GM12878 (cell line): ENCODE measurements at regions of chr3 and their contacts with region 1.

Region 1: DNA sequence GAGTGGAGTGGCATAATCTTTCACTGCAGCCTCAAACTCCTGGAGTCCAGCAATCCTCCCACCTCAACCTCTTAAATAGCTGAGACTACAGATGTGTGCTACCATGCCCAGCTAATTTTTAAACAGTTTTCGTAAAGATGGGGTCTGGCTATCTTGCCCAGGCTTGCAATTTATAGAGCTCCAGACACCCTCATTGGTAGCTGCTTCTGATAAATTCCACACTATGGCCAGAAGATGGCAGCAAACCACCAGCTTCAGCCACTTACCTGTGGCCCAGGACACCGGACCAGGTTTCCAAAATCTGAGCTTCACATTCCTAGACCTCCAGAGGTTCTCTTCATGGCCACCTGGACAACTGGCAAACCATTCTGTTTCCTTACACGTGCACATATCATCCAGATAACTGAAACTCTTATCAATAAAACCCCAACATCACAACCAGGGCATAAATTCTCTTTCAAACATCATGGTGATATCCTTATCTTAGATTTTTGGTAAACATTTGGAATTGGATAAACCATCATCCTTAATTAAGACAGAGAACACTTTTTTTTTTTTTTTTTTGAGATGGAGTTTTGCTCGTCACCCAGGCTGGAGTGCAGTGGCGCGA is 28.9 kb downstream of the FBXW12 start:
- DNase-seq: peak; percentile 26
- ATAC-seq: peak; percentile 92
- H3K4me3 ChIP-seq: no peak overlapping the region
- H3K27ac ChIP-seq: no peak overlapping the region
- H3K4me1 ChIP-seq: no peaks in the 10 kb centered on the region
- H3K27me3 ChIP-seq: no peaks in the 10 kb centered on the region
- CTCF ChIP-seq: peak; percentile 71 to 90 (median 80); a peak in 5 of 6 replicates
- EP300 ChIP-seq: no peak
- POLR2A ChIP-seq: no peak
- RAD21 ChIP-seq: peak; percentile 93

Region 2: GRCh38 chr3:48130321-48130904 is 270.5 kb before region 1 on chr3:
- CTCF ChIA-PET with region 1: no interaction called
- POLR2A ChIA-PET with region 1: no interaction called
- RAD21 ChIA-PET with region 1: no interaction called
- SMC1A ChIA-PET with region 1: no interaction called
- in situ Hi-C with region 1: no loop called
- intact Hi-C with region 1: no loop called
- DNase-seq: no peak
- ATAC-seq: no peak
- H3K4me3 ChIP-seq: no peak overlapping the region
- H3K27ac ChIP-seq: no peak overlapping the region
- H3K4me1 ChIP-seq: peaks cover 15% of the 10 kb centered on the region
- H3K27me3 ChIP-seq: no peaks in the 10 kb centered on the region
- CTCF ChIP-seq: no peak
- EP300 ChIP-seq: no peak
- POLR2A ChIP-seq: no peak
- RAD21 ChIP-seq: no peak

Region 3: DNA sequence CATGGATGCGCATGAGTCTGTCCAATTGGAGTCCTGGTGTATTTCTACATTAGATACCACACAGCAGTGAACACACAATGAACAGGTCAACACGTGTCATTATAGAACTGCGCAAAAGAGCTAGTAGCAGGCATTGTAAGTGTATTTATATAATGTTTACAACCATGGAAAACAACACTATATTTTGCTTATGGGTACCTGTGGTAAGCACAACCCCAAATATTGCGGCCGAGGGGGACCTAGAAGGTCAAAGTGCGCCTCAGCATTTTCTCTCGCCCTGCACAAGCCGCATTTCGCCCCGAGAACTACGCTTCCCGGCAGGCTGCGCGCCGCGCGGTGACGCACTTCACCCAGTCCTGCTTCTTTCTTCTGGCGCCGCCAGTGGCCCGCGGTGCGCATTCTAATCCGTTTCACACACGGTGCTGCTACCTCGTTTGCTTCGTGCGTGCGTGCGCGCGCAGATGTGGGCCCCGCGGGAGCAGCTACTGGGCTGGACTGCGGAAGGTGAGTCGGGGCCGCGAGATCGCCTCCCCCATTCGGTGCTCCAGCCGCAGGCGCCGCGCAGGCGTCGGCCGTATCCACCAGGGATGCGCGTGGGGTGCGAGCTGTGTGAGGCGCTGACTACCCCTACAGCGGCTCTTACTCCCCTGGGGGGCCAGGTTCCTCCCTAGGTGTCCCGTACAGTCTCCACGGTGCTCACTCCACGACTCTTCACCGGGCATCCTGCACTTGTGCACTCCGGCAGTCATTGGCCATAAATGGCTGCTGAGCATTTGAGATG is 160.0 kb before region 1 on chr3 and contains the start of gene ZNF589:
- CTCF ChIA-PET with region 1: interaction called, 5 read pairs
- POLR2A ChIA-PET with region 1: no interaction called
- RAD21 ChIA-PET with region 1: interaction called, 9 read pairs
- SMC1A ChIA-PET with region 1: interaction called, 10 read pairs
- in situ Hi-C with region 1: no loop called
- intact Hi-C with region 1: no loop called
- DNase-seq: peak; percentile 87
- ATAC-seq: peak; percentile 98
- H3K4me3 ChIP-seq: peak within 1 kb of the TSS; percentile 96
- H3K27ac ChIP-seq: peak within 1 kb of the TSS; percentile 74
- H3K4me1 ChIP-seq: peaks cover 7% of the 10 kb centered on the region; the same call in 1 of the 2 replicates
- H3K27me3 ChIP-seq: no peaks in the 10 kb centered on the region
- CTCF ChIP-seq: peak in 2 of 3 experiments; percentile 39 to 59; a peak in 5 of 6 replicates
- EP300 ChIP-seq: no peak
- POLR2A ChIP-seq: peak; percentile 99
- RAD21 ChIP-seq: 0 out of 2 replicates have a peak, but pooled peaks have one; percentile 15
- polyA plus RNA-seq, gene ZNF589: 6.5 to 10.1 TPM

Region 4: GRCh38 chr3:48388966-48389365 is 12.0 kb before region 1 on chr3:
- CTCF ChIA-PET with region 1: interaction called, 14 read pairs
- POLR2A ChIA-PET with region 1: no interaction called
- RAD21 ChIA-PET with region 1: interaction called, 4 read pairs
- SMC1A ChIA-PET with region 1: interaction called, 10 read pairs
- in situ Hi-C with region 1: no loop called
- intact Hi-C with region 1: no loop called
- DNase-seq: no peak
- ATAC-seq: no peak
- H3K4me3 ChIP-seq: no peak overlapping the region
- H3K27ac ChIP-seq: no peak overlapping the region
- H3K4me1 ChIP-seq: no peaks in the 10 kb centered on the region
- H3K27me3 ChIP-seq: no peaks in the 10 kb centered on the region
- CTCF ChIP-seq: no peak
- EP300 ChIP-seq: no peak
- POLR2A ChIP-seq: no peak
- RAD21 ChIP-seq: no peak

Region 5: DNA sequence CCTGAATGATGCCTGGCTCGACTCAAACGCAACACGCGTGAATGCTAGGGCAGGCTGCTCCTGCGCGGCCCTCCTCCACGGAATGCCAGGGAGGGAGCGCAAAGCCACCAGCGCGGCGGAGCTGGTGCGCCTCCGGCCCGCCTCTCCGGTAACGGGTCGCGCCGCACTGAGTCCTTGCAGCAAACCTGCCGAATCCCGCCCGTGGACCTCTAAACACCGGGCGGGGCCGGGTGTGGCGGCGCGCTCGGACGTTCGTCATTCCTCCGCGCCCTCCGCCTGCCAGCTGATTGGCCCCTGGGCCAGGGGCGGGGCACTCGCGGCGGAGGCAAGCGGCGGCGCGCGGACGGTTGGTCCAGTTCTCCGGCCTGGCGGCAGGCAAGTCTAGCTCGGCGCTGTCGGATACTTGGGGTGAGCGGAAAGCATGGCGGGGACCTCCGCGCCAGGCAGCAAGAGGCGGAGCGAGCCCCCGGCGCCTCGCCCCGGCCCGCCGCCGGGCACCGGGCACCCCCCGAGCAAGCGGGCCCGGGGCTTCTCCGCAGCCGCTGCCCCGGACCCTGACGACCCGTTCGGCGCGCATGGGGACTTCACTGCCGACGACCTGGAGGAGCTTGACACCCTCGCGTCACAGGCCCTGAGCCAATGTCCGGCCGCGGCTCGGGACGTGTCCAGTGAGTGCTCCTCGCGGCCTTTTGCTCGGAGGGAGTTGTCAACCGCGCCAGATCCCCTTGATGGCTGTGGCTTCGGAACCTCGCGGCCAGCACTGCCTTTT is 45.7 kb after region 1 on chr3 and contains the start of gene ATRIP:
- CTCF ChIA-PET with region 1: interaction called, 757 read pairs
- POLR2A ChIA-PET with region 1: no interaction called
- RAD21 ChIA-PET with region 1: interaction called, 8 read pairs
- SMC1A ChIA-PET with region 1: interaction called, 287 read pairs
- in situ Hi-C with region 1: no loop called
- intact Hi-C with region 1: no loop called
- DNase-seq: no peak
- ATAC-seq: peak; percentile 96
- H3K4me3 ChIP-seq: peak within 1 kb of the TSS; percentile 74
- H3K27ac ChIP-seq: peak within 1 kb of the TSS; percentile 72
- H3K4me1 ChIP-seq: peaks cover 13% of the 10 kb centered on the region
- H3K27me3 ChIP-seq: no peaks in the 10 kb centered on the region
- CTCF ChIP-seq: no peak
- EP300 ChIP-seq: no peak
- POLR2A ChIP-seq: peak; percentile 98
- RAD21 ChIP-seq: no peak
- polyA plus RNA-seq, gene ATRIP: 1.4 to 2.4 TPM

Region 6: DNA sequence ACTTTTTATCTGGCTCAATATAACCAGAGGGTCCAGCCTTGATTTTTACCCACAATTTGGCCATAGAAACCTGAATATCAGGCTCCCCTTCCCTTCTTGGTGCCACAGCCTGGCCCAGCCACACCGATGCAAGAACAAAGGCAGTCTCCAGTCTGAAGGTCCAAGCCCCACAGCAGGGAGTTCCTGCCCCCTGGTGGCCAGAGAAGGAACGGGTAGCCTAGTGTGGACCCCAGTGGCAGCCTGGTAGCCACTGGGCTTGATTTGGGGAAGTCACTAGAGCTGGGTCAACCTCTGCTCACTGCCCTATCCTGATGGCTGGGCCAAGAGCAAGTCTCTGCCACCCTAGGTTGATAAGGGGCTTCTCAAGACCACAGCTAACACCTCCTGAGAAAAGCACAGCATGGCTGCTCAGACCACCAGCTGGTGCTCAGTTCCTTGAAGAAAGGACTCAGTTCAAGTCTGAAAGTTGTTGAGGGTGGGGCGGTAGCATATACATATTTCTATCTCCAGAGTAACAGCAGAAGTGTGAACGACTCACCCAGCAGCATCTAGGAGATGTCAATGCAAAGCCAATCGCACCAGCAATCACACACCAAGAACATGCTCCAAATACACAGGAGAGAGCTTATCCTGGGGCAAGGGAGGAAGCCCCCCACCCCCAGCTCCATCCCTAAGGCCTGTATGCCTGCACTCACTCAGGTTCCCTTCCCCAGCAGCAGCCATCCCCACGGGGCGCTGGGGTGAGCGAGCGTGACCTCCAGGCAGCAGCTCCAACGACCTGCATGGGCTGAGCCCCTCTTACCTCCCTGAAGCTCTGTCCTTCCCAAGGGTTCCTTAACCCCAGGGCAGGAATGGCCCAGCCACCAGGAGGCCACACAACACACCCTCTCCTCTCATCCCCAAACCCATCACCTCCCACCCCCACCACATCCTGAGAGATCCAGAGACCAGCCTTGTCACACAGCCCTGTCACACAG is 148.1 kb after region 1 on chr3:
- CTCF ChIA-PET with region 1: interaction called, 61 read pairs
- POLR2A ChIA-PET with region 1: no interaction called
- RAD21 ChIA-PET with region 1: interaction called, 35 read pairs
- SMC1A ChIA-PET with region 1: interaction called, 23 read pairs
- in situ Hi-C with region 1: no loop called
- intact Hi-C with region 1: loop called (anchors 1 kb)
- DNase-seq: no peak
- ATAC-seq: peak; percentile 100
- H3K4me3 ChIP-seq: no peak overlapping the region
- H3K27ac ChIP-seq: no peak overlapping the region
- H3K4me1 ChIP-seq: no peaks in the 10 kb centered on the region; the same call in 1 of the 2 replicates
- H3K27me3 ChIP-seq: no peaks in the 10 kb centered on the region
- CTCF ChIP-seq: peak; percentile 90 to 95 (median 95)
- EP300 ChIP-seq: no peak
- POLR2A ChIP-seq: no peak
- RAD21 ChIP-seq: peak; percentile 93

Region 7: GRCh38 chr3:48635222-48636021 is 234.5 kb after region 1 on chr3 and contains the start of gene SLC26A6:
- CTCF ChIA-PET with region 1: interaction called, 17 read pairs
- POLR2A ChIA-PET with region 1: no interaction called
- RAD21 ChIA-PET with region 1: interaction called, 18 read pairs
- SMC1A ChIA-PET with region 1: interaction called, 3 read pairs
- in situ Hi-C with region 1: no loop called
- intact Hi-C with region 1: no loop called
- DNase-seq: peak; percentile 77
- ATAC-seq: peak; percentile 96
- H3K4me3 ChIP-seq: peak within 1 kb of the TSS; percentile 77
- H3K27ac ChIP-seq: peak within 1 kb of the TSS; percentile 57
- H3K4me1 ChIP-seq: peaks cover 11% of the 10 kb centered on the region; the same call in 1 of the 2 replicates
- H3K27me3 ChIP-seq: no peaks in the 10 kb centered on the region
- CTCF ChIP-seq: peak; percentile 52 to 81 (median 78)
- EP300 ChIP-seq: no peak
- POLR2A ChIP-seq: peak; percentile 77
- RAD21 ChIP-seq: peak; percentile 43
- polyA plus RNA-seq, gene SLC26A6: 2.1 to 2.9 TPM

Region 8: DNA sequence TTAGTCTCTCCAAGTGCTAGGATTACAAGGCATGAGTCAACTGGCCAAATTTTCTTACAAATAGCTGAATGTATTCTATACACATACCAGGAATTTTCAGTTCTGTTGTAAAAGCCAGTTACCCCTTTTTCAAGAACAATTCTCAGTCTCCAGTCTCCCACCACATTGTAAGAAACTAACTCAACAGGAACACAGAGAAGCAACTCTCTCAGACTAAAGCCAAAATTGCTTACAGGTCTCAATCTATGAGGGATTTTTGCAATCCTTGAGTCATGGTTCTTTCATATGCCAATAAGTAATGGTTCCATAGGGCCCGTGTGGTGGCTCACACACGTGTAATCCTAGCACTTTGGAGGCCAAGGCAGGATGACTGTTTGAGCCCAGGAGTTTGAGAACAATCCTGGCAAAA is 307.6 kb after region 1 on chr3:
- CTCF ChIA-PET with region 1: no interaction called
- POLR2A ChIA-PET with region 1: no interaction called
- RAD21 ChIA-PET with region 1: no interaction called
- SMC1A ChIA-PET with region 1: no interaction called
- in situ Hi-C with region 1: no loop called
- intact Hi-C with region 1: no loop called
- DNase-seq: no peak
- ATAC-seq: no peak
- H3K4me3 ChIP-seq: no peak overlapping the region
- H3K27ac ChIP-seq: no peak overlapping the region
- H3K4me1 ChIP-seq: no peaks in the 10 kb centered on the region; the same call in 1 of the 2 replicates
- H3K27me3 ChIP-seq: no peaks in the 10 kb centered on the region
- CTCF ChIP-seq: no peak
- EP300 ChIP-seq: no peak
- POLR2A ChIP-seq: no peak
- RAD21 ChIP-seq: no peak